ENCODE measurements at regions of chr20 and their contacts with region 1.

Region 1: DNA sequence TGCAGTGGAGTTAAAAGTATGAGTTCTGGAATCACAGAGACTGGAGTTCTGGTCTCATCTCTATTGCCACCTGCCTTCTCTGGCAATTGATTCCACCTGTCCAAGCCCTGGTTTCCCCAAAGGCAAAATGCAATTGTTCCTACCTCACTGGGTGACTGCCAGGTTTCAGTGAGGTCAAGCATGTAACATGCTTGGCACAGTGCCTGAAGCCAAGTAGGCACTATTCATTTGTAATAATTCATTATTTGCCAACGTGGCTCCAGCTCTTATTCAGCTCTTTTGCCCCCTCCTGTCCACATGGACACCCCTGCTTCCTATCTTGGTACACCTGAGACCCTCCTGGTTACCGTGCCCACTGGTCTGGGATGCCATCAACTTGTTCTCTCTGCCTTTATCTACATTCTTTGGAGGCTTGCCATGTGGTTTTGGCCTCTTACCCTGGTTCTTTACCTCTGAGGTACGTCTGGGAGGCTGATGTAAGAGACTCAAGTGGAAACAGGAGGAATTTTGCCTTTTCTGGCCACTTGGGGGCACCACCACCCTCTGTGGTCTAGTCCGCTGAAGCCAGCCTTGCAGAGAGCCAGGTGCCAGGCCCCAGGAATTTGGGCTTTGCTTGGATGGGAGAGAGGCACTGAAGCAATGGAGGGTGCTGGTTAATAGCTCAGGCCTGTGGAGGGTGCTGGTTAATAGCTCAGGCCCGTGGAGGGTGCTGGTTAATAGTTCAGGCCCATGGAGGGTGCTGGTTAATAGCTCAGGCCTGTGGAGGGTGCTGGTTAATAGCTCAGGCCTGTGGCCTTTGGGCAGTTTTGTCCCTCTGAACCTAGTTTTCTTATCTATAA is 1.7 kb downstream of the KCNK15 start:
- DNase-seq: peak; percentile 86
- H3K4me3 ChIP-seq: peak overlapping the region in 1 of 2 experiments; percentile 29; a peak in 1 of 4 replicates
- H3K27ac ChIP-seq: peak overlapping the region in 1 of 2 experiments; percentile 82; a peak in 2 of 4 replicates
- H3K4me1 ChIP-seq: peaks cover 6 to 37% of the 10 kb centered on the region in 2 experiments; a peak in 3 of 4 replicates
- H3K27me3 ChIP-seq: peaks cover 11% of the 10 kb centered on the region
- CTCF ChIP-seq: peak; percentile 78
- EP300 ChIP-seq: no peak
- RAD21 ChIP-seq: peak; percentile 75

Region 2: DNA sequence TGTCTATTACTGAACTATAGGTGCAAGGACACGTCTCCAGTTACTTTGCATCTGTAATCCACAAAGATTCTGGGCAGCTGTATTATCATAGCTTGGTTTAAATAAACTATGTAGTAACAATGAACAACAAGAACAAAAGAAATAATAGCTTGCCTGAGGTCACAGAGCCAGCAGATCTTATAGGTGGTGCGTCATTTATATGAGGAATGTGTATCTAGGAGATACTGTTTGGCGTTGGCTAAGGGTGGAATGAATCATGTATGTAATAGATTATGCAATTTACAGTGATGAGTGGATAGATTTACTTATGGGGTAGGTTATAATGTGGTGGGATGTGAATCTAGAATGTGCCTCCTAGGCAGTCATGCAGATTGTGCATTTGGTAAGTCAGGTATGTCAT is 349.1 kb before region 1 on chr20:
- CTCF ChIA-PET with region 1: no interaction called
- POLR2A ChIA-PET with region 1: no interaction called
- DNase-seq: no peak
- H3K4me3 ChIP-seq: no peak overlapping the region
- H3K27ac ChIP-seq: no peak overlapping the region
- H3K4me1 ChIP-seq: peaks cover 0 to 10% of the 10 kb centered on the region in 2 experiments; a peak in 1 of 4 replicates
- H3K27me3 ChIP-seq: peaks cover 11% of the 10 kb centered on the region; the same call in 1 of the 2 replicates
- CTCF ChIP-seq: no peak
- EP300 ChIP-seq: no peak
- RAD21 ChIP-seq: no peak

Region 3: GRCh38 chr20:44664131-44664530 is 83.3 kb before region 1 on chr20:
- CTCF ChIA-PET with region 1: no interaction called
- POLR2A ChIA-PET with region 1: no interaction called
- DNase-seq: no peak
- H3K4me3 ChIP-seq: no peak overlapping the region
- H3K27ac ChIP-seq: no peak overlapping the region
- H3K4me1 ChIP-seq: no peaks in the 10 kb centered on the region
- H3K27me3 ChIP-seq: no peaks in the 10 kb centered on the region
- CTCF ChIP-seq: no peak
- EP300 ChIP-seq: no peak
- RAD21 ChIP-seq: no peak

Region 4: GRCh38 chr20:44733341-44734069 is 13.9 kb before region 1 on chr20:
- CTCF ChIA-PET with region 1: interaction called, 16 read pairs
- POLR2A ChIA-PET with region 1: no interaction called
- DNase-seq: peak; percentile 71
- H3K4me3 ChIP-seq: no peak overlapping the region; a peak in 1 of 4 replicates
- H3K27ac ChIP-seq: no peak overlapping the region
- H3K4me1 ChIP-seq: peaks cover 17 to 28% of the 10 kb centered on the region in 2 experiments
- H3K27me3 ChIP-seq: no peaks in the 10 kb centered on the region
- CTCF ChIP-seq: peak; percentile 95
- EP300 ChIP-seq: no peak
- RAD21 ChIP-seq: peak; percentile 97

Region 5: GRCh38 chr20:44765652-44766347 is 18.4 kb after region 1 on chr20:
- CTCF ChIA-PET with region 1: interaction called, 110 read pairs
- POLR2A ChIA-PET with region 1: interaction called, 3 read pairs
- DNase-seq: no peak
- H3K4me3 ChIP-seq: no peak overlapping the region
- H3K27ac ChIP-seq: peak overlapping the region in 1 of 2 experiments; percentile 50; a peak in 2 of 4 replicates
- H3K4me1 ChIP-seq: peaks cover 0 to 43% of the 10 kb centered on the region in 2 experiments; a peak in 2 of 4 replicates
- H3K27me3 ChIP-seq: peaks cover 26% of the 10 kb centered on the region; the same call in 1 of the 2 replicates
- CTCF ChIP-seq: no peak
- EP300 ChIP-seq: no peak
- RAD21 ChIP-seq: no peak

Region 6: DNA sequence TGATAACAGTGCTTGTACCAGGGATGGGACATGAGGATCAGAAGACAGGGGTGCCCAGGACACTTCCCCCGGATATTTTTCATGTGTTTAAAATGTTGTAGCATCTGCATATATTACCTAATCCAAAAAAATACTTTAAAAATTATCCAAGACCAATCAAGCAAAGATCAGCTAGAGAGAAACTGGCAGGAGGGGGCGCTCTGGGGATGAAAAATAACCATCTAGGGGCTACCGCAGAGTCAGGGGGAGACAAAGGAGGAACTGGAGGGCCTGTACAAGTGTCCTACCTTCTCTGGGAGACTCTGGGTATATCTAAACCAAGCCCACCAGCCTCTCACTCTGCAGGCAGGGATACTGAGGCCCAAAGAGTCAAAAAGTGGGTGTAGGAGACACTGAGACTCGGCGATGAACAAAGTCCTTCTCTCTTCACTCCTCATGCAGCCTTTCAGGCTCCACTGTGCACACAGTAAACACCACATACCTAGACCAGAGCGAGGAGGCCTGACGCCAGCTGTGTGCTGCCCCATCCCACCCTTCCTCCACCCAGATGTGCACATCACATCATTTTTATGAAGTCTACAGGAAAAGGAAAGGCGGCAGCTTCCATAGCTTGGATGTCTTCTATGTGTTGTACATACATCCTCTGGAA is 53.1 kb after region 1 on chr20:
- CTCF ChIA-PET with region 1: interaction called, 29 read pairs
- POLR2A ChIA-PET with region 1: interaction called, 4 read pairs
- DNase-seq: peak; percentile 36
- H3K4me3 ChIP-seq: no peak overlapping the region
- H3K27ac ChIP-seq: no peak overlapping the region; a peak in 1 of 4 replicates
- H3K4me1 ChIP-seq: peaks cover 0 to 47% of the 10 kb centered on the region in 2 experiments; a peak in 2 of 4 replicates
- H3K27me3 ChIP-seq: no peaks in the 10 kb centered on the region; the same call in 1 of the 2 replicates
- CTCF ChIP-seq: peak; percentile 46
- EP300 ChIP-seq: no peak
- RAD21 ChIP-seq: peak; percentile 46

Region 7: GRCh38 chr20:44805979-44806620 is 58.7 kb after region 1 on chr20:
- CTCF ChIA-PET with region 1: interaction called, 29 read pairs
- POLR2A ChIA-PET with region 1: interaction called, 4 read pairs
- DNase-seq: peak; percentile 91
- H3K4me3 ChIP-seq: no peak overlapping the region
- H3K27ac ChIP-seq: peak overlapping the region in 1 of 2 experiments; percentile 90; a peak in 2 of 4 replicates
- H3K4me1 ChIP-seq: peaks cover 0 to 68% of the 10 kb centered on the region in 2 experiments; a peak in 2 of 4 replicates
- H3K27me3 ChIP-seq: peaks cover 34% of the 10 kb centered on the region
- CTCF ChIP-seq: no peak
- EP300 ChIP-seq: peak in 1 of 2 experiments; percentile 66; a peak in 1 of 4 replicates
- RAD21 ChIP-seq: no peak

Region 8: GRCh38 chr20:44819936-44820335 is 72.6 kb after region 1 on chr20:
- CTCF ChIA-PET with region 1: interaction called, 12 read pairs
- POLR2A ChIA-PET with region 1: no interaction called
- DNase-seq: no peak
- H3K4me3 ChIP-seq: no peak overlapping the region
- H3K27ac ChIP-seq: no peak overlapping the region
- H3K4me1 ChIP-seq: no peaks in the 10 kb centered on the region
- H3K27me3 ChIP-seq: no peaks in the 10 kb centered on the region
- CTCF ChIP-seq: no peak
- EP300 ChIP-seq: no peak
- RAD21 ChIP-seq: no peak

Region 9: GRCh38 chr20:44866703-44867335 is 119.4 kb after region 1 on chr20:
- CTCF ChIA-PET with region 1: interaction called, 65 read pairs
- POLR2A ChIA-PET with region 1: no interaction called
- DNase-seq: no peak
- H3K4me3 ChIP-seq: no peak overlapping the region
- H3K27ac ChIP-seq: no peak overlapping the region
- H3K4me1 ChIP-seq: peaks cover 0 to 8% of the 10 kb centered on the region in 2 experiments; a peak in 1 of 4 replicates
- H3K27me3 ChIP-seq: no peaks in the 10 kb centered on the region
- CTCF ChIP-seq: no peak
- EP300 ChIP-seq: no peak
- RAD21 ChIP-seq: no peak

Measured in SK-N-SH (cell line).